Aorta (tissue), 5 donors: ENCODE measurements at regions of chr9 and their contacts with region 1.

Region 1: DNA sequence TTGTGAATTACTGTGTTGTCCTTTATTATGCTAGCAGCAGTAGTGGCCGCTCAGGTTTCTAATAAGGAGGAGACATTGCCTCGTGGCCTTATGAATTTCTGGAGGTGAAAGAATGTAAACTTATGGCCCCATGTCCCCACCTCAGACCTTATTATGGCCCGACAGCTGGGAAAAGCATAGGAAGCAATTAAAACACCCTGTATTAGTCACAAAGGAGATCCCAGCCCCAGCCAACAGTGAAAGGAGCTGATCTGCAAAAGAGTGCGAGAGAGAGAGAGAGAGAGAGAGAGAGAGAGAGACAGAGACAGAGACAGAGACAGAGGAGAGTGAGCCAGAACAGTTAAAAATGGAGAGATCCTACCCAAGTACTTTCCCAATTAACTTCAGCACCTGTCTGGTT is 269.3 kb downstream of the DMRT2 start:
- DNase-seq: no peak
- ATAC-seq: no peak
- H3K4me3 ChIP-seq: no peak overlapping the region
- H3K27ac ChIP-seq: no peak overlapping the region
- H3K4me1 ChIP-seq: no peaks in the 10 kb centered on the region
- H3K27me3 ChIP-seq: no peaks in the 10 kb centered on the region

Region 2: GRCh38 chr9:1366276-1366675 is 46.8 kb after region 1 on chr9:
- intact Hi-C with region 1: loop called in 1 of 2 experiments (anchors 5 kb)
- DNase-seq: no peak
- ATAC-seq: no peak
- H3K4me3 ChIP-seq: no peak overlapping the region
- H3K27ac ChIP-seq: no peak overlapping the region
- H3K4me1 ChIP-seq: no peaks in the 10 kb centered on the region
- H3K27me3 ChIP-seq: no peaks in the 10 kb centered on the region